ENCODE measurements at regions of chr20 and their contacts with region 1.

Region 1: GRCh38 chr20:35954200-35954906 is at the start of gene SCAND1:
- DNase-seq: peak; percentile 94 to 98 (median 97)
- ATAC-seq: peak; percentile 92
- H3K4me3 ChIP-seq: peak within 1 kb of the TSS; percentile 84
- H3K4me3 Mint-ChIP-seq: peak within 1 kb of the TSS; percentile 86 to 99 (median 99)
- H3K27ac ChIP-seq: peak within 1 kb of the TSS; percentile 98
- H3K27ac Mint-ChIP-seq: peak within 1 kb of the TSS; percentile 96 to 100 (median 99)
- H3K4me1 ChIP-seq: peaks cover 17 to 23% of the 10 kb centered on the region in 2 donors
- H3K4me1 Mint-ChIP-seq: peaks cover 13 to 36% (median 22%) of the 10 kb centered on the region in 7 donors
- H3K27me3 ChIP-seq: no peaks in the 10 kb centered on the region
- H3K27me3 Mint-ChIP-seq: peaks cover 0 to 2% (median 0%) of the 10 kb centered on the region in 5 donors
- total RNA-seq, gene SCAND1: 41.8 to 56.2 (median 51.7) TPM

Region 2: GRCh38 chr20:34676642-34677373 is 1277.5 kb before region 1 on chr20 and contains the start of gene PIGU:
- CTCF ChIA-PET with region 1: no interaction called
- POLR2A ChIA-PET with region 1: interaction called, 3 read pairs
- intact Hi-C with region 1: loop called in 1 of 2 experiments (anchors 2 kb)
- DNase-seq: peak; percentile 88 to 97 (median 96)
- ATAC-seq: peak; percentile 99
- H3K4me3 ChIP-seq: peak within 1 kb of the TSS; percentile 63
- H3K4me3 Mint-ChIP-seq: peak within 1 kb of the TSS; percentile 95 to 99 (median 96)
- H3K27ac ChIP-seq: peak within 1 kb of the TSS; percentile 95
- H3K27ac Mint-ChIP-seq: peak within 1 kb of the TSS; percentile 85 to 98 (median 97)
- H3K4me1 ChIP-seq: peaks cover 4 to 5% of the 10 kb centered on the region in 2 donors
- H3K4me1 Mint-ChIP-seq: peaks cover 14 to 37% (median 24%) of the 10 kb centered on the region in 7 donors
- H3K27me3 ChIP-seq: no peaks in the 10 kb centered on the region
- H3K27me3 Mint-ChIP-seq: no peaks in the 10 kb centered on the region
- total RNA-seq, gene PIGU: 8.6 to 21.3 (median 16.1) TPM

Region 3: DNA sequence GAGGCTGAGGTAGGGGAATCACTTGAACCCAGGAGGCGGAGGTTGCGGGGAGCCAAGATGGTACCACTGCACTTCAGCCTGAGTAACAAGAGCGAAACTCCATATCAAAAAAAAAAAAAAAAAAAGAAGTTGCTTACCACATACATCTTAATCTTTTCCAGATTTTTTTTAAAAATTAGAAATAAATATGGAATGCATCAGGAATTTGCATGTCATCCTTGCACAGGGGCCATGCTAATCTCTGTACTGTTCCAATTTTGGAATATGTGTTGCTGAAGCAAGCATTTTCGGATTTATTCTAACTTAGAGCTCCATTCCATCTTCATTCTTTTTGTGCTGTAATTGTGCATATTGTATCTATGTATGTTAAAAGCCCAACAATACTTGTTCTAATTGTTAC is 924.2 kb before region 1 on chr20:
- CTCF ChIA-PET with region 1: no interaction called
- POLR2A ChIA-PET with region 1: no interaction called
- intact Hi-C with region 1: no loop called
- DNase-seq: no peak
- ATAC-seq: no peak
- H3K4me3 ChIP-seq: no peak overlapping the region
- H3K4me3 Mint-ChIP-seq: no peak overlapping the region
- H3K27ac ChIP-seq: no peak overlapping the region
- H3K27ac Mint-ChIP-seq: no peak overlapping the region
- H3K4me1 ChIP-seq: no peaks in the 10 kb centered on the region
- H3K4me1 Mint-ChIP-seq: peaks cover 0 to 4% (median 0%) of the 10 kb centered on the region in 7 donors
- H3K27me3 ChIP-seq: no peaks in the 10 kb centered on the region
- H3K27me3 Mint-ChIP-seq: no peaks in the 10 kb centered on the region

Region 4: DNA sequence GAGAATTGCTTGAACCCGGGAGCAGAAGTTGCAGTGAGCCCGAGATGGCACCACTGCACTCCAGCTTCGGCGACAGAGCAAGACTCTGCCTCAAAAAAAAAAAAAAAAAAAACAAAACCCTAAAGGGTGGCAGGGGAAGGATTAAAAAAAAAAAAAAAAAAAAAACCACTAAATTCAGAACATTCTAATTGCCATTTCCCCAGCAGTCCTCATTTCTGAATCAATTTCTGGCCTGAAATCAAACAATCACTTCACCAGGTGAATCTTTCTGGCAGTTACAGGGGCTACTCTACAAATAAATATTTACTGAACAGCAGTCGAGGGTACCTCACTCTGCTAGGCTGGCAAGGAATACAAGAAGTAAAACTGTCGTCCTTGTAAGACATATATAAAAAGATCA is 543.7 kb before region 1 on chr20:
- CTCF ChIA-PET with region 1: no interaction called
- POLR2A ChIA-PET with region 1: interaction called, 7 read pairs
- intact Hi-C with region 1: loop called in 1 of 2 experiments (anchors 1 kb)
- DNase-seq: no peak
- ATAC-seq: no peak
- H3K4me3 ChIP-seq: peak overlapping the region; percentile 79
- H3K4me3 Mint-ChIP-seq: peak overlapping the region; percentile 92 to 100 (median 98)
- H3K27ac ChIP-seq: no peak overlapping the region
- H3K27ac Mint-ChIP-seq: peak overlapping the region in 8 of 9 donors; percentile 48 to 100 (median 97)
- H3K4me1 ChIP-seq: peaks cover 8 to 9% of the 10 kb centered on the region in 2 donors
- H3K4me1 Mint-ChIP-seq: peaks cover 17 to 24% (median 22%) of the 10 kb centered on the region in 7 donors
- H3K27me3 ChIP-seq: no peaks in the 10 kb centered on the region
- H3K27me3 Mint-ChIP-seq: peaks cover 0 to 2% (median 0%) of the 10 kb centered on the region in 5 donors

Region 5: GRCh38 chr20:35664544-35665221 is 289.7 kb before region 1 on chr20 and contains the starts of genes CPNE1 and RBM12:
- CTCF ChIA-PET with region 1: no interaction called
- POLR2A ChIA-PET with region 1: interaction called, 13 read pairs
- intact Hi-C with region 1: loop called (anchors 2 to 5 kb)
- DNase-seq: peak; percentile 89 to 96 (median 96)
- ATAC-seq: peak; percentile 89
- H3K4me3 ChIP-seq: peak within 1 kb of the TSS; percentile 88
- H3K4me3 Mint-ChIP-seq: peak within 1 kb of the TSS; percentile 89 to 98 (median 96)
- H3K27ac ChIP-seq: peak within 1 kb of the TSS; percentile 100
- H3K27ac Mint-ChIP-seq: peak within 1 kb of the TSS; percentile 98 to 100 (median 99)
- H3K4me1 ChIP-seq: peaks cover 35 to 38% of the 10 kb centered on the region in 2 donors
- H3K4me1 Mint-ChIP-seq: peaks cover 32 to 49% (median 47%) of the 10 kb centered on the region in 7 donors
- H3K27me3 ChIP-seq: no peaks in the 10 kb centered on the region
- H3K27me3 Mint-ChIP-seq: no peaks in the 10 kb centered on the region
- total RNA-seq, gene CPNE1: 250 to 378 (median 305) TPM
- total RNA-seq, gene RBM12: 98.2 to 122 (median 114) TPM

Region 6: GRCh38 chr20:35849706-35850105 is 104.6 kb before region 1 on chr20:
- CTCF ChIA-PET with region 1: no interaction called
- POLR2A ChIA-PET with region 1: no interaction called
- intact Hi-C with region 1: no loop called
- DNase-seq: no peak
- ATAC-seq: no peak
- H3K4me3 ChIP-seq: no peak overlapping the region
- H3K4me3 Mint-ChIP-seq: no peak overlapping the region
- H3K27ac ChIP-seq: no peak overlapping the region
- H3K27ac Mint-ChIP-seq: peak overlapping the region in 7 of 9 donors; percentile 5 to 85 (median 47)
- H3K4me1 ChIP-seq: no peaks in the 10 kb centered on the region
- H3K4me1 Mint-ChIP-seq: peaks cover 10 to 46% (median 26%) of the 10 kb centered on the region in 7 donors
- H3K27me3 ChIP-seq: no peaks in the 10 kb centered on the region
- H3K27me3 Mint-ChIP-seq: no peaks in the 10 kb centered on the region

Region 7: GRCh38 chr20:36050436-36051317 is 96.3 kb after region 1 on chr20:
- CTCF ChIA-PET with region 1: interaction called, 3 read pairs
- POLR2A ChIA-PET with region 1: interaction called, 24 read pairs
- intact Hi-C with region 1: loop called (anchors 1 to 5 kb)
- DNase-seq: peak; percentile 72 to 89 (median 83)
- ATAC-seq: peak; percentile 97
- H3K4me3 ChIP-seq: peak overlapping the region; percentile 91
- H3K4me3 Mint-ChIP-seq: peak overlapping the region; percentile 86 to 98 (median 92)
- H3K27ac ChIP-seq: peak overlapping the region; percentile 91
- H3K27ac Mint-ChIP-seq: peak overlapping the region; percentile 85 to 96 (median 92)
- H3K4me1 ChIP-seq: peaks cover 6 to 12% of the 10 kb centered on the region in 2 donors
- H3K4me1 Mint-ChIP-seq: peaks cover 35 to 55% (median 49%) of the 10 kb centered on the region in 7 donors
- H3K27me3 ChIP-seq: no peaks in the 10 kb centered on the region
- H3K27me3 Mint-ChIP-seq: peaks cover 0 to 14% (median 3%) of the 10 kb centered on the region in 5 donors

Region 8: DNA sequence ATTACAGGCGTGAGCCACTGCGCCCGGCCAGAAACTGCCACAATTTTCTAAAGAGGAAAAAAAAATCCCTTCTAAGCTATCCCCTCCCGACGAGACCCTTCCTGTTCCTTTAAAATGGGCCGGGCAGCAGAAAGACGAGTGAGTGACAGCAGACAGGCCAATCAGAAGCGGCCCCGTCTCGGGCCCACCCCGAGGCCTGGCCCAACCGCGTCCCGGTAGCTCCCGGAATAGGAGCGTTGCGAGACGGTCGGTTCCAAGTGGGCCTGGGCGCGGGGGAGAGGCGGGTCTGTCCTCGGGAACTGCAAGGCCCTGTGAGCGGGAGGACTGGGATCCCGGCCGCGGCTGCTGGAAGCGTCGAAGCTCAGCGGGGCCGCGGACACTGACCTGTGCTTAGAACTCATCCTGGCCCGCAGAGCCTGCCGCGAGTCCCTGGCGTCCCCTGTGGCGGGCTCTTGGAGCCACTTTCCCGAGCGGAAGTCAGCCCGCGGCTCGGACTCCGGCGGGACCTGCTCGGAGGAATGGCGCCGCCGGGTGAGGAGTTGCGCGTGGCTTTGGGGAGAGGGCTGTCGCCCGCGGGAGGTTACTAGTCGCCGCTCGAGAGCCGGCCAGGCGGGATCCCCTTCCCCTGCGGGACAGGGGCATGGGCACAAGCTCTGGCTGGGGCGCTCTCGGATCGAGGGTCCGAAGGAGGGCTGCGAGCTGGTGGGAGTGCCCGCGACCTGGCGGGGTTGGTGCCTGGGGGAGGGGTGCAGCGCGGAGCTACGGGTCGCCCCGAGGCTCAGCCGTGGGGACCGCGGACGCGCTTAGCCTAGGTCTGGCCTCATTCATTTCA is 1224.7 kb after region 1 on chr20 and contains the starts of genes MROH8 and RPN2:
- CTCF ChIA-PET with region 1: no interaction called
- POLR2A ChIA-PET with region 1: interaction called, 4 read pairs
- intact Hi-C with region 1: loop called in 1 of 2 experiments (anchors 2 kb)
- DNase-seq: peak; percentile 83 to 95 (median 92)
- ATAC-seq: peak; percentile 96
- H3K4me3 ChIP-seq: peak within 1 kb of the TSS; percentile 85
- H3K4me3 Mint-ChIP-seq: peak within 1 kb of the TSS; percentile 89 to 99 (median 96)
- H3K27ac ChIP-seq: peak within 1 kb of the TSS; percentile 87
- H3K27ac Mint-ChIP-seq: peak within 1 kb of the TSS; percentile 94 to 99 (median 97)
- H3K4me1 ChIP-seq: peaks cover 13 to 15% of the 10 kb centered on the region in 2 donors
- H3K4me1 Mint-ChIP-seq: peaks cover 34 to 48% (median 36%) of the 10 kb centered on the region in 7 donors
- H3K27me3 ChIP-seq: no peaks in the 10 kb centered on the region
- H3K27me3 Mint-ChIP-seq: peaks cover 0 to 6% (median 0%) of the 10 kb centered on the region in 5 donors
- total RNA-seq, gene MROH8: 1.2 to 1.9 (median 1.6) TPM
- total RNA-seq, gene RPN2: 88.7 to 222 (median 108) TPM

Measured in naive thymus-derived CD4-positive, alpha-beta T cell (primary cell).